AG04449 (cell line): ENCODE measurements at regions of chr17 and their contacts with region 1.

Region 1: DNA sequence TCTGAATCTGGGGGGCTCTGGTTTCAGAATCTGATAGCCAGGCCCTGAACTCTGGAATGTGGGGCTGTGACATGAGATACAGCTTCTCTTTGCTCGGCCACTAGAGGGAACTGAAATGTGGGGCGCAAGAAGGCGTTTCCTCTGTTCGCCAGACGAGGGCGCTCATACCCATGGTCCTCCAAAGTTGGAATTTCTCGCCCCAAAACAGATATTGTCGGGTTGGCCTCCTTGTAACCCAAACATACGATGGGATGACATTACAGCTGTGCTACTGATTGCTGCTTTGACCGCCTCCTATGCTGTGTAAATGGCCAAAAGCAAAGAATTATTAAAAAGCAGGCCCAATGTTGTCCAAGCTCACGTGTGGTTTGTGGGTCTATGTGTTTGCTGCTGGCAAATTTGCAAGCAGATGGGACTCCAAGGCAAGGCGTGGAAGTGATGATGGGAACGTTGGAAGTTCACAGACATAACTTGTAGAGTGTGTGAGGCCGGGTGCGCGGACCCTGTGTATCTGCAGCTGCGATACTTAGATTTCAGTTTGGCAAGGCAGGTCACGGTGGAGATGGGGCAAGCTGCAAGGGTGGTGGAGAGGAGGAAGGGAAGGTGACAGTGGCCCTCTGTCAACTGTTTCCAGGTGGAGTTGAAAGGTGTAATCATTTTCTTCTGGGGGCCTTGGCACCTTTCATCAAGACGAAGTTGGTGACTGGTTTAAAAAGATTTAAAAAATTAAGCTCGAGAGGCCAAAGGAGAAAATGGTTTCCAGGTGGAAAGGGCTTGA is 13.0 kb upstream of the MSI2 start:
- DNase-seq: peak; percentile 1
- H3K4me3 ChIP-seq: no peak overlapping the region
- CTCF ChIP-seq: peak; percentile 99

Region 2: DNA sequence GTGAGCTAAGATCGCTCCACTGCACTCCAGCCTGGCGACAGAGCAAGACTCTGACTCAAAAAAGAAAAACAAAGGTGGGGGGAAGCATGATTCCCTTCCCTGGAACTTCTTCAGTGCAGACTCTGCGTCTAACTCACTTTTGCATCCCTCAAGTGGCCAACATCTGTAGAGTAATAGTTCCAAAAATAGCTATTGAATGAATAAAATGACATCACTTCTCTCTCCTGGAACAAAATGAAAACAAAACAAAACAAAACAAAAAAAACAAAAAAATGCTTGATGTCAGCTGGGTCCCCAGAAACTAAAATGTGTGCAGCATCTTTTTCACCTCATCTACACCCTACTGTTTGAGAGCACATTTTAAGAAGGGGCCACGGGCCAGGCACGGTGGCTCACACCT is 847.6 kb before region 1 on chr17:
- CTCF ChIA-PET with region 1: no interaction called
- POLR2A ChIA-PET with region 1: no interaction called
- DNase-seq: no peak
- H3K4me3 ChIP-seq: no peak overlapping the region
- CTCF ChIP-seq: no peak

Region 3: GRCh38 chr17:57255776-57256681 is 12.7 kb after region 1 on chr17 and contains the start of gene MSI2:
- CTCF ChIA-PET with region 1: interaction called, 64 read pairs
- POLR2A ChIA-PET with region 1: no interaction called
- DNase-seq: peak; percentile 5
- H3K4me3 ChIP-seq: peak within 1 kb of the TSS; percentile 64
- CTCF ChIP-seq: peak; percentile 7

Region 4: DNA sequence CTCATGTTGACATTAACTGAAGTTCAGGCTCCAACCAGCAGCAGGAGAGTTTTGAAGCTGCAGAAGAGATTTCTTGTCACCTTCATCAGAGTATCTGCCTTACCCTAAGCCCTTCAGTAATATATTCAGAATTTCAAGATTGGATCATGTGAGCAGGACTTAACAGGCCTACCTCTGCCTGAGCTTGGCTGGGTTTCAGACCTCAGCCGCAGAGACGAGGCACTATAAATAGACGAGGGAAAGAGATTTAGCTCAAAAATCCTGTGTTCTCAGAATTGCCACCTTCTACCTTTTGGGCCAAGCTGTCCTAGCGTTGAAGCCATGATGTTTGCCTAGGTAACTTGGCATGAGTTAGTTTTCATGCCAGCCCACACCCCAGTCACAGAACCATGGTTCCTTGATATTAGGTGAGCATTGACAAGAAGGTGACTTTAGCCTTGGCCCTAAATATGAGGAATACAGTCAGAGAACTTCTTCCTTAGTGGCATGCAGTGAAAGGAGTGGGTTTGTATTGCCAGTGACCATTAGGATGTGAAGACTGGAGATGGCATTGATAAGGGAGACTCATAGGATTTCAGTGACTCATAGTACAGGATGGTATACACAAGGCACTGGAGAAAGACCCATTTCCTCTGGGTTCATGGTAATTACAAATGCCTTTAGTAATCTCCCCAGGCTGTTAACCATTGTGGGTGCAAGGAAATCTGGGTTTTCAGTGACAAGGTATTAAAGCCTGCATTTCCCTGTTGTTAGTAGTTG is 237.3 kb after region 1 on chr17:
- CTCF ChIA-PET with region 1: interaction called, 18 read pairs
- POLR2A ChIA-PET with region 1: no interaction called
- DNase-seq: peak; percentile 52
- H3K4me3 ChIP-seq: no peak overlapping the region
- CTCF ChIP-seq: no peak

Region 5: GRCh38 chr17:57552114-57552624 is 308.8 kb after region 1 on chr17:
- CTCF ChIA-PET with region 1: interaction called, 10 read pairs
- POLR2A ChIA-PET with region 1: no interaction called
- DNase-seq: no peak
- H3K4me3 ChIP-seq: no peak overlapping the region
- CTCF ChIP-seq: peak; percentile 28

Region 6: DNA sequence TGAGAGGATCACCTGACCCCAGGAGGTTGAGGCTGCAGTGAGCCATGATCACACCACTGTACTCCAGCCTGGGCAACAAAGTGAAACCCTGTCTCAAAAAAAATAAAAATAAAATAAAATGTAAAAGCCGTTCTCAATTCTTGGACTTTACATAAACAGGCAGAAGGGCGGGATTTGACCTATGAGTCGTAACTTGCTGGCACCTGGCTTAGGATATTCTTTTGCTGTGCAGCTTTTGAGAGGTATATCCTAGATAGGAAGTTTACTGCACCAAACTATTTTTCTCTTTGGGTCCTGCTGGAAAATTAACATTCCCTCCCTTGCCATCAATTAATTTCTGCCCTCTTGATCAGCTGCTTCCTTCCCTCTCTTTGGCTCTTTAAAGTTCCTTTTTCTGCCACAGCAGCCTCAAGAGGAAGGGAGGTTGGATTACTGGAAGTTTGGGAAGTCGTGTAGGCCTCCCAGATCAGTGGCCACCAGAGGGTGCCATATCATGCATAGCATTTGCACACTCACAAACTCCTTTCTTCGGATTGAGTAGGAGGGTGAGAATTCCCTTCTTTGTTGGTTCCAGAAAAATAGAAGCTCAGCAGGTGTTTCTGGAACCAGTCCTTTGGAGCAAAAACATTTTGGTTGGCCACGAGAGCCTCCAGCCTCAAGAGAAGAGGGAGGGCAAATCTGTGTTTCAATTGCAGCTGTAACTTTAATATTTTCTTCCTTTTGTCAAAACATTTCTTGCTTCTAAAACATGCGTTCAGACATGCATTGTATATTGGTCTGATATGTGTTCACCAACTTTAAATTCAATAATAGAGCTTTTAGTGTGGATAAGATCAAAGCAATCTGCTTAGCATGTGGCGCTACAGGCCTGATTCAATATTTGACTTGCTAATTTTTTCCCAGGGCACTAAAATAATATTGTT is 354.4 kb after region 1 on chr17:
- CTCF ChIA-PET with region 1: interaction called, 71 read pairs
- POLR2A ChIA-PET with region 1: no interaction called
- DNase-seq: peak; percentile 36
- H3K4me3 ChIP-seq: no peak overlapping the region
- CTCF ChIP-seq: peak; percentile 83

Region 7: DNA sequence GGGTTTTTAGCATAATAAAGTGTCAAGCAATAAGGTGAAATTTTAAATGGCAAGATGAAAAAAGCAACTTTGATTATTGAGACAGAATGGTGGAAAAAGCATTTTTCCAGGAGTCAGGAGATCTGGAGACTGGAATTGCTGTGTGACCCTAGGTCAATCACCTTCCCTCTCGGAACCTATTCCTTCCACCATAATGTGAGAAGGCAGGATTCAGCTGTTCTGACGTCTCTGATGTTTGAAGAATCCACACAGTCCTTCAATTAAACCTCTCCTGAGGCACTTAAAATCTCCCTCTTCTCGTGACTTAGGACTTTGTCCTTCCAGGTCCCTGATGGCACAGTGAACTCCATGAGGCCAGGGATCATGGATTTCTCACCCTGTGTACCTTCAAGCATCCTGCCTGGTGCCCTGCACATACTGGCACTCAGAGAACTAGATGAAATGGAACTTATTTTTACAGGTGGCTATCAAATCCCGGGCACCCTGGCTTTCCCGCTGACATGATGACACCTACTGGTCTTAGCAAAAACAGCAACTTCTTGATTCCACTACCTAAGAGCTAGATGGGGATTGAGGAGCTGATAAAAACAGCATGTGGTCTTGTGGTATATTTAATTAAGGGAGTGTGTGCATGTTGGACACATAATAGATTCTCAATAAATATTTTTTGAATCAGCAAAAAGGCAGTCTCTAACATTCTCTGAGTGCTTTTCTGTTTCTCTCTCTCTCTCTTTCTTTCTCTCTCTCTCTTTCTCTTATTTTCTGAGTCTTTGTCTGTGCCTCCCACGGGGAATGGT is 504.1 kb after region 1 on chr17:
- CTCF ChIA-PET with region 1: interaction called, 47 read pairs
- POLR2A ChIA-PET with region 1: no interaction called
- DNase-seq: peak; percentile 24
- H3K4me3 ChIP-seq: no peak overlapping the region
- CTCF ChIP-seq: peak; percentile 59